ENCODE measurements at regions of chr11 and their contacts with region 1.

Region 1: GRCh38 chr11:64803163-64803845 is at the start of gene MAP4K2:
- DNase-seq: no peak
- H3K4me3 ChIP-seq: peak within 1 kb of the TSS; percentile 75
- CTCF ChIP-seq: peak; percentile 38

Region 2: GRCh38 chr11:64729851-64730382 is 73.4 kb before region 1 on chr11:
- CTCF ChIA-PET with region 1: no interaction called
- POLR2A ChIA-PET with region 1: no interaction called
- DNase-seq: no peak
- H3K4me3 ChIP-seq: no peak overlapping the region
- CTCF ChIP-seq: no peak

Region 3: GRCh38 chr11:64787526-64788320 is 15.6 kb before region 1 on chr11:
- CTCF ChIA-PET with region 1: interaction called, 16 read pairs
- POLR2A ChIA-PET with region 1: no interaction called
- DNase-seq: no peak
- H3K4me3 ChIP-seq: no peak overlapping the region
- CTCF ChIP-seq: peak; percentile 77